Activated T-helper 2 cell treated with anti-CD3 and anti-CD28 coated beads, Interferon-gamma antibody, Interleukin-2, Interleukin-4, amounts not matched to agents 10 μg/mL and 5 μg/mL and 100 μg/mL, durations not matched to agents 14 hours and 24 hours and 36 hours (primary cell): ENCODE measurements at regions of chr16 and their contacts with region 1.

Region 1: GRCh38 chr16:3431779-3432219 is 11.5 kb downstream of the ZNF597 start:
- DNase-seq: peak; percentile 20
- H3K4me3 Mint-ChIP-seq: no peak overlapping the region
- H3K27ac Mint-ChIP-seq: no peak overlapping the region
- H3K4me1 Mint-ChIP-seq: peaks cover 13% of the 10 kb centered on the region
- H3K27me3 Mint-ChIP-seq: no peaks in the 10 kb centered on the region

Region 2: GRCh38 chr16:3364774-3365427 is 66.9 kb before region 1 on chr16:
- intact Hi-C with region 1: loop called (anchors 10 kb)
- DNase-seq: peak; percentile 70
- H3K4me3 Mint-ChIP-seq: peak overlapping the region; percentile 56
- H3K27ac Mint-ChIP-seq: peak overlapping the region; percentile 31
- H3K4me1 Mint-ChIP-seq: no peaks in the 10 kb centered on the region
- H3K27me3 Mint-ChIP-seq: no peaks in the 10 kb centered on the region

Region 3: DNA sequence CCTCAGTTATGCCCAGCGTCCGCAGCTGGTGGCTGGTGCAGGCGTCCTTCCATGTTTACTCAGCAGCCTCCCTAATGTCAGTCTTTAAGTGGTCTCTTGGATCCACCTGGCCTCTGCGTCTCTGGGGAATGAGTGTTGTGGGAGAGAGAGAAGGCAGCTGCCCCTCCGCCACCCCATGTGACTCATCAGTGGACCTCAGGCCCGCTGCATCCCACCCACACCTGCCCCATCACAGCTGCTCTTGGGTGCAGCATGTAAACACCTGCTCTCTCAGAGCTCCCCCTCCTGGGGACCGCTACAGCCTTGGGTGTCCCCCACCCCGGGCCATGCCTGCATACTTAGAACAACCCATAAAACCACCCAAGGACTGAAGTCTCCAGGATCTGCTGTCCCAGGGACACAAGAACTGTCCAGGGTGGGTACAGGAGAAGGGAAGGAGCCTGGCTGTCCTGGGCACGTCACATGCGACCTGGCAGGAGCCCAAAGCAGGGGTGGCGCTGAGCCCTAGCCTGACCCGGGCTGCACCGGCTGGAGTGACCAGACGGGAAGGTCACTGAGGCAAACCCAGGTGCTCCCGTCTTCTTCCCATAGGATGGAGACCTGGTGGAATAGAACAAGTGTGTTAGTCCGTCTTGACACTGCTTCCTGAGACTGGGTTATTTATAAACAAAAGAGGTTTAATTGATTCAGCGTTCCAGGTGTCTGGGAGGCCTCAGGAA is 59.3 kb after region 1 on chr16:
- intact Hi-C with region 1: no loop called
- DNase-seq: no peak
- H3K4me3 Mint-ChIP-seq: no peak overlapping the region
- H3K27ac Mint-ChIP-seq: no peak overlapping the region
- H3K4me1 Mint-ChIP-seq: no peaks in the 10 kb centered on the region
- H3K27me3 Mint-ChIP-seq: no peaks in the 10 kb centered on the region